Endothelial cell of umbilical vein (primary cell): ENCODE measurements at regions of chr2 and their contacts with region 1.

Region 1: GRCh38 chr2:171086352-171087290 is 74.1 kb downstream of the TLK1 start:
- DNase-seq: peak; percentile 92
- H3K4me3 ChIP-seq: peak overlapping the region in 1 of 3 experiments; percentile 20
- H3K27ac ChIP-seq: peak overlapping the region; percentile 42
- H3K4me1 ChIP-seq: peaks cover 14% of the 10 kb centered on the region
- H3K27me3 ChIP-seq: no peaks in the 10 kb centered on the region
- CTCF ChIP-seq: peak; percentile 67 to 69
- POLR2A ChIP-seq: no peak

Region 2: GRCh38 chr2:170940066-170940465 is 146.6 kb before region 1 on chr2:
- CTCF ChIA-PET with region 1: no interaction called
- POLR2A ChIA-PET with region 1: no interaction called
- dilution Hi-C with region 1: no loop called
- intact Hi-C with region 1: no loop called
- DNase-seq: no peak
- H3K4me3 ChIP-seq: no peak overlapping the region
- H3K27ac ChIP-seq: no peak overlapping the region
- H3K4me1 ChIP-seq: no peaks in the 10 kb centered on the region
- H3K27me3 ChIP-seq: no peaks in the 10 kb centered on the region
- CTCF ChIP-seq: no peak
- POLR2A ChIP-seq: no peak

Region 3: DNA sequence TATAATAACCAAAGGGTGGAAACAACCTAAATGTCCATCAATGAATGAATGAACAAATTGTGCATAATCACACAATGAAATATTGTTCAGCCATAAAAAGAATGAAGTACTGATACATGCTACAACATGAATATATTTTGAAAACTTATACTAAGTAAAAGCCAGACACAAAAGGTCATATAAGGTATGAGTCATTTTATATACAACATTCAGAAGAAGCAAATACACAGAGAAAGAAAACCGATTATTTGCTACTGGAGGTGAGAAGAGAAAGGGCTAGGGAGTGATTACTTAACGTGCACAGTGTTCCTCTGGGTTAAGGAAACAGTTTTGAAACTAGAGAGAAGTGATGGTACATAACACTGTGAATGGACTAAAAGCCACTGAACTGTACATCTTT is 52.3 kb before region 1 on chr2:
- CTCF ChIA-PET with region 1: interaction called, 12 read pairs
- POLR2A ChIA-PET with region 1: no interaction called
- dilution Hi-C with region 1: no loop called
- intact Hi-C with region 1: no loop called
- DNase-seq: no peak
- H3K4me3 ChIP-seq: no peak overlapping the region
- H3K27ac ChIP-seq: no peak overlapping the region
- H3K4me1 ChIP-seq: no peaks in the 10 kb centered on the region
- H3K27me3 ChIP-seq: no peaks in the 10 kb centered on the region
- CTCF ChIP-seq: no peak
- POLR2A ChIP-seq: no peak

Region 4: GRCh38 chr2:171102802-171103201 is 16.2 kb after region 1 on chr2:
- CTCF ChIA-PET with region 1: interaction called, 21 read pairs
- POLR2A ChIA-PET with region 1: no interaction called
- dilution Hi-C with region 1: no loop called
- intact Hi-C with region 1: no loop called
- DNase-seq: no peak
- H3K4me3 ChIP-seq: no peak overlapping the region
- H3K27ac ChIP-seq: no peak overlapping the region
- H3K4me1 ChIP-seq: no peaks in the 10 kb centered on the region
- H3K27me3 ChIP-seq: no peaks in the 10 kb centered on the region
- CTCF ChIP-seq: no peak
- POLR2A ChIP-seq: no peak

Region 5: DNA sequence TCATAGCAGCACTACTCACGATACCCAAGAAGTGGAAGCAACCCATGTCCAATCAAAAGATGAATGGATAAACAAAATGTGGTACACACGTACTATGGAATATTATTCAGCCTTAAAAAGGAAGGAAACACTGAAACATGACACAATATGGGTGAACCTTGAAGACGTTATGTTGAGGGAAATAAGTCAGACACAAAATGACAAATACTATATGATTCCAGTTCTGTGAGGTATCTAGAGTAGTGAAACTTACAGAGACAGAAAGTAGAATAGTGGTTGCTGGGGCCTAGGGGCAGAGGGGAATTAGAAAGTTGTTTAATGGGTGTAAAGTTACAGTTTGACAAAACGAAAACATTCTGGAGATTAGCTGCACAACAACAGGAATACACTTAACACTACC is 49.4 kb after region 1 on chr2:
- CTCF ChIA-PET with region 1: interaction called, 10 read pairs
- POLR2A ChIA-PET with region 1: no interaction called
- dilution Hi-C with region 1: no loop called
- intact Hi-C with region 1: no loop called
- DNase-seq: no peak
- H3K4me3 ChIP-seq: no peak overlapping the region
- H3K27ac ChIP-seq: no peak overlapping the region
- H3K4me1 ChIP-seq: no peaks in the 10 kb centered on the region
- H3K27me3 ChIP-seq: no peaks in the 10 kb centered on the region
- CTCF ChIP-seq: no peak
- POLR2A ChIP-seq: no peak

Region 6: DNA sequence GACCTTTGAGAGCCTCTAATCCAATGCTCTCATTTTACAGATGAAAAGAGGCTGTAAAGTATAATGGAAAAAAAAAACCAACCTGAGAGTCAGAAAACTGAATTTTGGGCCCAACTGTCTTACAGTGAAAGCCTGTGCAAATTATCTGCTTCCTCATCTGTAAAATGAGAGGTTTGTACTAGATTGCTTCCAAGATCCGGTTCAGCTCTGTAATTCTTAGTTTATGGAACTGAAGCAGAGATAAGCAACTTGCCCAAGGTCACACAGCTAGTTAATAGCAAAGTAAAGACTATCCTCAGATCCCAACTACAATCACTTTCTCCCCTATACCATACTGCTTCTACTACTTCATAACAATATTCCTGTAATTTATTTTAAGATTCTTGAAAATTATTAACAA is 67.7 kb after region 1 on chr2:
- CTCF ChIA-PET with region 1: interaction called, 43 read pairs
- POLR2A ChIA-PET with region 1: no interaction called
- dilution Hi-C with region 1: no loop called
- intact Hi-C with region 1: loop called (anchors 2 kb)
- DNase-seq: peak; percentile 42
- H3K4me3 ChIP-seq: no peak overlapping the region
- H3K27ac ChIP-seq: no peak overlapping the region
- H3K4me1 ChIP-seq: peaks cover 19% of the 10 kb centered on the region
- H3K27me3 ChIP-seq: no peaks in the 10 kb centered on the region
- CTCF ChIP-seq: no peak
- POLR2A ChIP-seq: no peak

Region 7: GRCh38 chr2:171253900-171254655 is 167.5 kb after region 1 on chr2:
- CTCF ChIA-PET with region 1: no interaction called
- POLR2A ChIA-PET with region 1: no interaction called
- dilution Hi-C with region 1: no loop called
- intact Hi-C with region 1: no loop called
- DNase-seq: no peak
- H3K4me3 ChIP-seq: no peak overlapping the region
- H3K27ac ChIP-seq: no peak overlapping the region
- H3K4me1 ChIP-seq: no peaks in the 10 kb centered on the region
- H3K27me3 ChIP-seq: no peaks in the 10 kb centered on the region
- CTCF ChIP-seq: no peak
- POLR2A ChIP-seq: no peak

Region 8: DNA sequence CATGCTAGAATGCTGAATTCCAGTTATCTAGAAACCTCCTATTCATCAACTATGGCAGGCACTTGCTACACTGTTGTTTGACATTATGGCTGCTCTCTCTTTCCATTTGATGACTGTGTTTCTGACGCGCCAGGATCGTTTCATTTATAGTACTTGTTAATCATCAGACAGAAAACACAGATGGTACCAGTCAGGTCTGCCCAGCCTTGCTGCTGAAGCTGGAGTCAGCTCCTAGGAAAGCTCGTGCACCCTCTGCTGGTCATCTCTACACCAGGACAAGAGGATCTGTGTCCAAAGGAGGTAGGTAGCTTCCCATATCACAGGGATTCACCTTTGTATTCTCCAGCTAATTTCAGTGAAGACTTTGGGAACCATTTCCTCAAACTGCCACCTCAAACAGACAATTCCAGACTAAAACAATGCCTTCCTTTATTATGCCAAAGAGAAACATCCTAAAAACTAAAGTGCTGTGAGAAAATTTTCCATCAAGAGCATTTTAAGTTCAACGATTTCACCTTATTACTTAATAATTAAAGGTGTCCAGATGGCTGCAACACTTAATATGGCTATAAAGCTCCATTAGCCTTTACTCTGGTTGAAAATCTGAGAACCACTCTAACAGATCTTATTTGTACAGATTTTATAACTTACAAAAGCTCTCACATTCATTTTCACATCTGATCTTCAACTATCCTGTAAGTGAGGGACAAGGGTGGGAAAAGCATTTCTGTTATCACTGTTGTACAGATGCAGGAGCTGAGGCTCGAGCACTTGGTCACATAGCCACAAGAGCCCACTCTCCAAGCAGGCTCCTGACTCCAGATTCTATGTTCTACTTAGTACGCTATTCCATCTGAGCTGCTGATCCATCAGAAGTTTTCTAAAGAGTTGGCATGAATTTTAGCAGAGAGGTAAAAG is 329.6 kb after region 1 on chr2:
- CTCF ChIA-PET with region 1: interaction called, 31 read pairs
- POLR2A ChIA-PET with region 1: no interaction called
- dilution Hi-C with region 1: no loop called
- intact Hi-C with region 1: loop called (anchors 2 kb)
- DNase-seq: peak; percentile 95
- H3K4me3 ChIP-seq: no peak overlapping the region
- H3K27ac ChIP-seq: no peak overlapping the region
- H3K4me1 ChIP-seq: peaks cover 13% of the 10 kb centered on the region
- H3K27me3 ChIP-seq: no peaks in the 10 kb centered on the region
- CTCF ChIP-seq: peak; percentile 84 to 85
- POLR2A ChIP-seq: no peak